Sigmoid colon (tissue), 7 donors: ENCODE measurements at regions of chr17 and their contacts with region 1.

Region 1: GRCh38 chr17:57855391-57856035 is 5.7 kb upstream of the MRPS23 start:
- DNase-seq: peak; percentile 64
- H3K4me3 ChIP-seq: no peak overlapping the region
- H3K27ac ChIP-seq: peak overlapping the region; percentile 88 to 97 (median 94)
- H3K4me1 ChIP-seq: peaks cover 0 to 82% (median 72%) of the 10 kb centered on the region in 4 donors
- H3K27me3 ChIP-seq: no peaks in the 10 kb centered on the region
- CTCF ChIP-seq: no peak
- EP300 ChIP-seq: no peak
- POLR2A ChIP-seq: no peak

Region 2: GRCh38 chr17:57697891-57698711 is 157.4 kb before region 1 on chr17:
- intact Hi-C with region 1: no loop called
- DNase-seq: no peak
- H3K4me3 ChIP-seq: no peak overlapping the region
- H3K27ac ChIP-seq: no peak overlapping the region
- H3K4me1 ChIP-seq: no peaks in the 10 kb centered on the region
- H3K27me3 ChIP-seq: no peaks in the 10 kb centered on the region
- CTCF ChIP-seq: no peak
- EP300 ChIP-seq: no peak
- POLR2A ChIP-seq: no peak

Region 3: DNA sequence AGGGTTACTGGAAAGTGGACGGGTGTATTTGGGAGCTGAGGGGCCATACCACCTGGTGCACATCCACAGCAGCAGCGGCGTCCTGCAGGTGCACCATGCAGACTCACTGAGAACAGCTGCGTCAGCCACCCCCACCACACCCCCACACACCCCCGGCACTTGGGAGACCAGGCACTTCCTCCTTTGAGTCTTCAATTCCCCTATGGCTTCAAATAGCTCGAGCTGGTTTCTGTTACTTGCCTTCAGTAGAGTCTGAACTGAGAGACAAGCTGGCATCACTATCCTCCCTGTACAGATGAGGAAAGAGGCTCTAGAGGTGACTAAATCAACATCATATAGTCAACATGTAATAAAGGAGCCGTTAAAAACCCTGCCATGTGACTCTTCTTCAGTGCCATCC is 84.3 kb after region 1 on chr17:
- intact Hi-C with region 1: no loop called
- DNase-seq: no peak
- H3K4me3 ChIP-seq: no peak overlapping the region
- H3K27ac ChIP-seq: peak overlapping the region; percentile 97 to 100 (median 99)
- H3K4me1 ChIP-seq: peaks cover 0 to 100% (median 97%) of the 10 kb centered on the region in 4 donors
- H3K27me3 ChIP-seq: no peaks in the 10 kb centered on the region
- CTCF ChIP-seq: no peak
- EP300 ChIP-seq: no peak
- POLR2A ChIP-seq: no peak

Region 4: DNA sequence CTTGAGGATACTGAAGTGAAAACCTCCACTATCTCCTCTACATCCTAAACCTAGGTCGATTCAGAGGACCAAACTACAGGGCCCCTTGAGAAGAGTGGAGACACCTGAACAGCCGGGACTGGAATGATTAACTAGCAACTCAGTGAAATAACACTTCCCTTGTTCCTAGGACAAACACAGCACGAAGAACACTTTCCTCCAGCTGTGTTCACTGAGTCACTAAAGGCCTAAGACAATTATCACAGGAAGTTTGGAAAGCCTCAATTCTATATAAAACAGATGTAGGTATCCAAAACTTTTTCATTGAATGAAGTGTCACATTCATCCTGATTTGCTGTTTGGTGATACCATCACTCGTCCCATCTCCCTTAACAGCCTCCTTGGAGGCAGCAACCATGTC is 115.2 kb after region 1 on chr17:
- intact Hi-C with region 1: no loop called
- DNase-seq: no peak
- H3K4me3 ChIP-seq: no peak overlapping the region
- H3K27ac ChIP-seq: peak overlapping the region in 1 of 4 donors; percentile 35
- H3K4me1 ChIP-seq: peaks cover 0 to 22% (median 13%) of the 10 kb centered on the region in 4 donors
- H3K27me3 ChIP-seq: no peaks in the 10 kb centered on the region
- CTCF ChIP-seq: no peak
- EP300 ChIP-seq: no peak
- POLR2A ChIP-seq: no peak

Region 5: GRCh38 chr17:58112970-58113631 is 257.6 kb after region 1 on chr17:
- intact Hi-C with region 1: loop called (anchors 5 kb)
- DNase-seq: peak; percentile 85
- H3K4me3 ChIP-seq: no peak overlapping the region
- H3K27ac ChIP-seq: no peak overlapping the region
- H3K4me1 ChIP-seq: no peaks in the 10 kb centered on the region
- H3K27me3 ChIP-seq: no peaks in the 10 kb centered on the region
- CTCF ChIP-seq: peak; percentile 93 to 96 (median 94)
- EP300 ChIP-seq: no peak
- POLR2A ChIP-seq: no peak